Posterior vena cava (tissue), 2 donors: ENCODE measurements at regions of chrX and their contacts with region 1.

Region 1: GRCh38 chrX:120419463-120419862 is 49.6 kb downstream of the LAMP2 start:
- DNase-seq: no peak

Region 2: GRCh38 chrX:119004920-119005524 is 1414.4 kb before region 1 on chrX:
- intact Hi-C with region 1: loop called in 1 of 2 experiments (anchors 5 kb)
- DNase-seq: no peak

Region 3: DNA sequence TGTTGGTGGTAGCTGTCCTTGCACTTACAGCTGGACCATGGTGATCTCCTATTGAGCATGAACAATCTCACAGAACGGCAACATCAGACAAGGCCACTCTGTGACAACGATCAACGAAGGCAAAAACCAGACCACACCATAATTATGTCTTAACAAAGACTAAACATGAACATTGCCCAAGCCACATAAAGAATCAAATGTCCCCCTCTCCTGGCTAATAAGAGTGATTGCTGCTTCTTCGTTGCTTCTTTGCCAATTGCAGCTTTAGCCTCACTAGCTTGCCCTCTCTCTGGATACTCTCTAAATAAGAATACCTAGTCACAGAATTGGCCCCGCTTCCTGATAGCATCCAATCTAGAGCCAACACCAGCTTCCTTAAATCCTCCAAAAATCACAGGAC is 1224.8 kb before region 1 on chrX:
- intact Hi-C with region 1: loop called in 1 of 2 experiments (anchors 5 kb)
- DNase-seq: no peak

Region 4: DNA sequence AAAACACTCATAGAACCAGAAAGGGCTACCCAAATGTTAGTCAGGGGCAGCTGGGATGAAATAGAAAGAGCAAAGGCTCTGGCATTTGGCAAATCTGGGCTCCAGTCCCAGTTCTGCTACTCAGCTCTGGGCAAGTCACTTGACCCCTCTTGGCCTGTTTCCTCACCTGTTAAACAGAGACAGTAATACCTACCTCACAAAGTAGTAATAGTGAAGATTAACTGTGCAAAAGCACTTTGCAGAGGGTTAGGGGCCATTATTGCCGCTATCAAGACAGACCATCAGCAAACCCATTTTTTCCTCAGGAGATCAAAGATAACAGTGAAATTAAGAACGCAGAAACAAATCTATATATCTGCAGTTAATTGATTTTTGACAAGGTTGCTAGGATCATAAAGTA is 148.2 kb before region 1 on chrX:
- intact Hi-C with region 1: no loop called
- DNase-seq: no peak

Region 5: DNA sequence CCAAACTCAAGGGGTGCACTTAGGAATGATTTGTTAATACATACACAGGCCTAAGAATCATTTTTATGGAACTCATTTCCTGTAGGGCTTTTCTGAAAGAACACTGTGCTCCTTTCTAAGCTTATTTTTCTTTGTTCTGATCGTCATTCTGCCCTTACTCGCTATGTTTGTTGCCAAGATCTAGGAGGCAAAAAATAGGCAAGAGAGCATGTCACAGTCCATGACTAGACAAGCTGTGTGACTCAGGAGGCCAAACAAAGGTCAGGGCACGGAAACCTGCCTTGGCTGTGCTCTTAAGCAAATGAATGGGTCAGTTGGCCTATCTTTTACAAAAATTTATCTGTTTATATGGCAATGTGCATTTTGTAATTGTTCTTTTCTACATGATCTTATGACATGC is 252.9 kb after region 1 on chrX:
- intact Hi-C with region 1: no loop called
- DNase-seq: peak; percentile 87